ENCODE measurements at regions of chr2 and their contacts with region 1.

Region 1: GRCh38 chr2:237662671-237663093 is 35.3 kb downstream of the LRRFIP1 start:
- DNase-seq: peak; percentile 80 to 93 (median 86)
- ATAC-seq: peak; percentile 79 to 89 (median 86)
- H3K4me3 ChIP-seq: peak overlapping the region in 3 of 12 donors; percentile 7 to 21 (median 17)
- H3K27ac ChIP-seq: peak overlapping the region in 9 of 12 donors; percentile 10 to 78 (median 48)
- H3K4me1 ChIP-seq: peaks cover 4 to 38% (median 29%) of the 10 kb centered on the region in 12 donors
- H3K27me3 ChIP-seq: no peaks in the 10 kb centered on the region
- CTCF ChIP-seq: peak in 1 of 12 donors; percentile 5
- POLR2A ChIP-seq: no peak

Region 2: GRCh38 chr2:237581751-237582746 is 80.6 kb before region 1 on chr2:
- intact Hi-C with region 1: loop called in 2 of 10 experiments (anchors 5 kb)
- DNase-seq: peak; percentile 82 to 92 (median 83)
- ATAC-seq: peak; percentile 89 to 94 (median 92)
- H3K4me3 ChIP-seq: peak overlapping the region in 5 of 12 donors; percentile 10 to 40 (median 29)
- H3K27ac ChIP-seq: peak overlapping the region; percentile 19 to 89 (median 84)
- H3K4me1 ChIP-seq: peaks cover 0 to 27% (median 17%) of the 10 kb centered on the region in 12 donors
- H3K27me3 ChIP-seq: no peaks in the 10 kb centered on the region
- CTCF ChIP-seq: peak; percentile 19 to 83 (median 62)
- POLR2A ChIP-seq: no peak

Region 3: GRCh38 chr2:237590272-237591140 is 72.2 kb before region 1 on chr2 and contains the start of gene RAB17:
- intact Hi-C with region 1: loop called in 1 of 10 experiments (anchors 10 kb)
- DNase-seq: peak in 2 of 5 donors; percentile 39 to 79
- ATAC-seq: peak in 3 of 4 donors; percentile 34 to 77 (median 52)
- H3K4me3 ChIP-seq: peak within 1 kb of the TSS in 1 of 12 donors; percentile 31
- H3K27ac ChIP-seq: peak within 1 kb of the TSS in 1 of 12 donors; percentile 51
- H3K4me1 ChIP-seq: peaks cover 0 to 38% (median 21%) of the 10 kb centered on the region in 12 donors
- H3K27me3 ChIP-seq: peaks cover 0 to 2% (median 0%) of the 10 kb centered on the region in 9 donors
- CTCF ChIP-seq: no peak
- POLR2A ChIP-seq: no peak
- total RNA-seq, gene RAB17: 1.1 to 7.3 (median 3.6) TPM

Region 4: GRCh38 chr2:237603718-237604362 is 58.8 kb before region 1 on chr2:
- intact Hi-C with region 1: loop called in 2 of 10 experiments (anchors 10 kb)
- DNase-seq: peak in 2 of 5 donors; percentile 54 to 63
- ATAC-seq: peak in 3 of 4 donors; percentile 21 to 70 (median 56)
- H3K4me3 ChIP-seq: peak overlapping the region in 3 of 12 donors; percentile 8 to 15 (median 12)
- H3K27ac ChIP-seq: peak overlapping the region in 7 of 12 donors; percentile 17 to 57 (median 30)
- H3K4me1 ChIP-seq: peaks cover 0 to 41% (median 28%) of the 10 kb centered on the region in 12 donors
- H3K27me3 ChIP-seq: no peaks in the 10 kb centered on the region
- CTCF ChIP-seq: no peak
- POLR2A ChIP-seq: no peak

Region 5: GRCh38 chr2:237627441-237628246 is 35.0 kb before region 1 on chr2 and contains the start of gene LRRFIP1:
- intact Hi-C with region 1: loop called in 5 of 10 experiments (anchors 5 kb)
- DNase-seq: peak in 4 of 5 donors; percentile 62 to 70 (median 67)
- ATAC-seq: peak in 3 of 4 donors; percentile 52 to 81 (median 79)
- H3K4me3 ChIP-seq: peak within 1 kb of the TSS; percentile 52 to 92 (median 73)
- H3K27ac ChIP-seq: peak within 1 kb of the TSS; percentile 82 to 96 (median 90)
- H3K4me1 ChIP-seq: peaks cover 7 to 69% (median 48%) of the 10 kb centered on the region in 12 donors
- H3K27me3 ChIP-seq: peaks cover 0 to 6% (median 0%) of the 10 kb centered on the region in 9 donors
- CTCF ChIP-seq: peak in 2 of 12 donors; percentile 31 to 39
- POLR2A ChIP-seq: peak in 1 of 2 donors; percentile 36
- total RNA-seq, gene LRRFIP1: 78.7 to 151 (median 111) TPM

Measured in heart left ventricle (tissue), 16 donors.